ENCODE measurements at regions of chr10 and their contacts with region 1.

Region 1: DNA sequence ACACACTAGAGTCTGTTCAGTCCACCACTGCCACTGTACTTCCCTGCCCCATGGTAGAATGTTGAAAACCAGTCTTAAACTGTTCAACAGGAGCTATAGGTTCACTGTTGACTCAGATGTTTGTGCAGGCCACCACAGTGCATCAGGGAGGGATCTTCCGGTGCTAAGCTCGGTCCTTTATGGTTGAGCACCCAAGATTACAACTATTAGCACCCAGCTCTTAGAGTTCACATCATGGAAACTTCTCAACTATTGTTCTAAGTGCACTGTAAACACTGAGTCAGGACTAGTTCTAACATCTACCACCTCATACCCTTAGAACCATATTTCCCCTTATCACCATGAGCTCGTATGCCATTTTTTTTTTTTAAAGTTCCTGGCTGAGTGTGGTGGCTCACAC is 97.1 kb upstream of the MXI1 start:
- DNase-seq: no peak
- ATAC-seq: no peak

Region 2: GRCh38 chr10:110007701-110008517 is 102.4 kb before region 1 on chr10 and contains the start of gene ADD3:
- intact Hi-C with region 1: loop called (anchors 10 kb)
- DNase-seq: peak; percentile 97
- ATAC-seq: peak; percentile 91
- total RNA-seq, gene ADD3: 115 TPM

Measured in Right ventricle myocardium superior (tissue), 1 donor.